Psoas muscle (tissue), 8 donors: ENCODE measurements at regions of chr12 and their contacts with region 1.

Region 1: GRCh38 chr12:69900720-69901131 is 75.7 kb downstream of the MYRFL start:
- DNase-seq: peak; percentile 65 to 73
- ATAC-seq: peak in 3 of 4 donors; percentile 31 to 78 (median 48)
- H3K4me3 ChIP-seq: no peak overlapping the region
- H3K27ac ChIP-seq: no peak overlapping the region
- H3K4me1 ChIP-seq: peaks cover 6% of the 10 kb centered on the region
- H3K27me3 ChIP-seq: no peaks in the 10 kb centered on the region
- CTCF ChIP-seq: peak; percentile 83

Region 2: GRCh38 chr12:69868695-69869094 is 32.0 kb before region 1 on chr12:
- intact Hi-C with region 1: no loop called
- DNase-seq: no peak
- ATAC-seq: no peak
- H3K4me3 ChIP-seq: no peak overlapping the region
- H3K27ac ChIP-seq: no peak overlapping the region
- H3K4me1 ChIP-seq: no peaks in the 10 kb centered on the region
- H3K27me3 ChIP-seq: peaks cover 0 to 2% (median 0%) of the 10 kb centered on the region in 3 donors
- CTCF ChIP-seq: no peak

Region 3: GRCh38 chr12:70242695-70243509 is 342.2 kb after region 1 on chr12 and contains the start of gene CNOT2:
- intact Hi-C with region 1: loop called in 1 of 2 experiments (anchors 5 kb)
- DNase-seq: peak; percentile 91 to 95
- ATAC-seq: peak; percentile 96 to 97 (median 97)
- H3K4me3 ChIP-seq: peak within 1 kb of the TSS; percentile 92
- H3K27ac ChIP-seq: peak within 1 kb of the TSS; percentile 98
- H3K4me1 ChIP-seq: peaks cover 46% of the 10 kb centered on the region
- H3K27me3 ChIP-seq: no peaks in the 10 kb centered on the region
- CTCF ChIP-seq: no peak
- total RNA-seq, gene CNOT2: 28.5 to 46.3 (median 38.1) TPM

Region 4: DNA sequence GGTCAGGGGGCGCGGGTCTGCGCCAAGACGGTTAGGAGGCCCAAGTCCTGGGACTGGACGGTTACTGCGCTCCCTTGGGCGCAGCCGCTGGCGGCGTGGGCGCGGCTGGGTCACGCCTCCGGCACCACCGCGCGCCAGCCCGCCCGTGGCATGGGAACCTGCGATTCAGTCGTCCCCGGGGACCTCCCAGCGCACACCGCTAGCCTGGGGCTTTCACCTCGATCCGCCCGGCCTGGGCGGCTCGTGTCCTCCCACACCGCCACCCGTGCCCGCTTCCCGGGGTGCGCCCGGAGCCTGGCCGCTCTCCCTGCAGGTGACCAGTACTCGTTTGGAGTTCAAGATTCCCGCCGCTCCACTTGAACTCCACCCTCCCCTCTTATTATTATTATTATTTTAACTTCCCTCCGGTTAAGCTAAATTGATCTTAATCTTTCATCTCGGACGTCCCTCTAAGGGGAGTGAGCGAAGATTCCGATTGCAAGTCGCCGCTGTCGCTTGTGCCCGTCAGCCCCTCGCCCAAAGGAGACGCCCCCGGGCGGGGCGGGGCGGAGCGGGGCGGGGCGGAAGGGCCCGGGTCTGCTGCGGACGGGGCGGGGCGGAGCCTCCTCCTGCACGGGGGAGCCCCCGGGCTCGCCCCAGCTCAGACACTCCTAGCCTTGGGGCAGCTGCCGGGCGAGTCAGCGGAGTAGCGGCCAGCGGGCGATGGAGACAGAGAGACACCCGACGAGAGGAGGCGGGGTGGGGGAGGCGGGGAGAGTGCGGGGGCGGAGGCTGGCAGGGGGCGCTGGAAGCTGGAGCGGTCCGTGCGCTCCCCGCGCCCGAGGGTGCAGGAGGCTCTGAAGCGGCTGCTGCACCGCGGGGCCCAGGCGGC is 465.2 kb after region 1 on chr12 and contains the start of gene KCNMB4:
- intact Hi-C with region 1: loop called in 1 of 2 experiments (anchors 10 kb)
- DNase-seq: peak; percentile 73 to 81
- ATAC-seq: peak; percentile 60 to 82 (median 76)
- H3K4me3 ChIP-seq: peak within 1 kb of the TSS; percentile 76
- H3K27ac ChIP-seq: no peak within 1 kb of the TSS
- H3K4me1 ChIP-seq: peaks cover 8% of the 10 kb centered on the region
- H3K27me3 ChIP-seq: peaks cover 0 to 50% (median 0%) of the 10 kb centered on the region in 3 donors
- CTCF ChIP-seq: no peak
- total RNA-seq, gene KCNMB4: 0.54 to 1.9 (median 0.62) TPM

Region 5: DNA sequence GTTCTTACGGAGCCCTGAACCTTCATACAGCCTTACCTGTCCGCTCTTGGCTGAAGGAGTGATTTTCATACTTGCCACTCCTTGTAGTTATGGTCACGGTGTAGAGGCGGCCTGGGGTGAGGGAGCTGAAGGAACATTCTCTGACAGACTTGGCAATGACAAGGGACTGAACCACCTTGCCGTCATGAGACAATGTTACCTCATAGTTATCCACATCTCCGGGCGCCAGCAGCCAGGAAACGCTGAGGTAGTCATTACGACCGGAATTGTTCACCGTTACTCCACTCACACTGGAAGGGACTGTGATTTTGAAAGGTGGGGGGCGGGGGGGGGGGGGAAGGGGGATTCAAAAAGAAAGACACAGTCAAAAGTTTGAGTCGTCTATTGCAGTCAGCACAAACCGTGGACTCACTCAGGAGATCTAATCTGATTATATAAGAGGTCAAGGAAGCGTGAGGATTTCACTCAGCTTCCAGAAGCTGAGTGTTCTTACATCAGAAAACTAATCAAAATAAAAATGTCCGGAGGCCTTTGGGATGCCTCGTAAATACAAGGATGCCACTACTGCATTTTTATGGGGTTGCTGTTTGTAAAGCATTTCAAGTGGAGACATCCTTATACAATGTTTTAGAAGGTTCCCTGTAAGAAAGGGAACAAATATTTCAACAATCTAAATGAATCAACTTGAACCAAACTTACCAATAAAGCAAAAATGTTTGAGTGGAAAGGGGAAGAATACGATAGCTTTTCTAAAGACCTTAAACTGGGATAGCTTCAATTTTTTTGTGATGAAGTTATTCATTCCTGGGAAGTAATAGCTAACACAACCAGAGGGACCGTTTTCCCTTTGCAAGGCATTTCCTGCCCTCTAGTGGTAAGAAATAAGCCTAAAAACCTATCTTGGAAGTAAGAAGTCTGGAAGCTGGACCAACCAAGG is 675.9 kb after region 1 on chr12:
- intact Hi-C with region 1: loop called (anchors 5 kb)
- DNase-seq: no peak
- ATAC-seq: peak in 2 of 4 donors; percentile 66 to 77
- H3K4me3 ChIP-seq: no peak overlapping the region
- H3K27ac ChIP-seq: no peak overlapping the region
- H3K4me1 ChIP-seq: no peaks in the 10 kb centered on the region
- H3K27me3 ChIP-seq: no peaks in the 10 kb centered on the region
- CTCF ChIP-seq: peak; percentile 85

Region 6: GRCh38 chr12:70719672-70720420 is 819.1 kb after region 1 on chr12:
- intact Hi-C with region 1: loop called in 1 of 2 experiments (anchors 5 kb)
- DNase-seq: peak; percentile 27 to 60
- ATAC-seq: peak in 2 of 4 donors; percentile 56 to 74
- H3K4me3 ChIP-seq: peak overlapping the region; percentile 35
- H3K27ac ChIP-seq: peak overlapping the region; percentile 34
- H3K4me1 ChIP-seq: no peaks in the 10 kb centered on the region
- H3K27me3 ChIP-seq: no peaks in the 10 kb centered on the region
- CTCF ChIP-seq: peak; percentile 81